ENCODE measurements at regions of chr4 and their contacts with region 1.

Region 1: DNA sequence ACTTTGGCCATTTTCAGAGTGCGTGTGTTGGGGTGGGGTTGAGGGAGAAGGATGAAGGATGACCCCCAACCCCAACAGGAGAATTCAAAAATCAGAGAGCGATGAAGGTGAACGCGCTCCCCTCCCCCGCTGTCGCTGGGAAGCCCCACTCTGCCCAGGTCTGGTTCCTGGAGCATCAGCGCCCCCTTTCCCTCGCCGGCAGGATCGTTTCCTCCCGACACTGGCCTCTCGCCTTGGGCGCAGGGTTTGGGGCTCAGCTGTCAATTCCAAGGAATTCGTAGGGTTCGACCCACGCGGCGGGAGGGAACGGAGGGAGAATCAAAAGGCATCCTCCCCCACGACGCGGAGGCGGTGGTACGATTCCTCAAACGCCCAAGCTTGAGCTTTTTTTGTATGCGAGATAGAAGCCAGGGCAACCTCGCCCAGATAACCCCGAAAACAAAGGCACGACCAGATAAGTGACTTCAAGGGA is 1.0 kb upstream of the PDGFRA start:
- DNase-seq: peak; percentile 74 to 78 (median 77)
- ATAC-seq: peak; percentile 68 to 74 (median 73)
- H3K4me3 ChIP-seq: peak overlapping the region; percentile 3 to 43 (median 6)
- H3K27ac ChIP-seq: no peak overlapping the region
- H3K4me1 ChIP-seq: peaks cover 0 to 51% (median 16%) of the 10 kb centered on the region in 4 donors
- H3K27me3 ChIP-seq: peaks cover 0 to 33% of the 10 kb centered on the region in 2 donors
- CTCF ChIP-seq: peak; percentile 62 to 80 (median 74)
- POLR2A ChIP-seq: no peak

Region 2: GRCh38 chr4:53816561-53816960 is 411.5 kb before region 1 on chr4:
- intact Hi-C with region 1: loop called in 1 of 2 experiments (anchors 10 kb)
- DNase-seq: no peak
- ATAC-seq: peak in 2 of 4 donors; percentile 18 to 27
- H3K4me3 ChIP-seq: no peak overlapping the region
- H3K27ac ChIP-seq: no peak overlapping the region
- H3K4me1 ChIP-seq: no peaks in the 10 kb centered on the region
- H3K27me3 ChIP-seq: no peaks in the 10 kb centered on the region
- CTCF ChIP-seq: no peak
- POLR2A ChIP-seq: no peak

Region 3: GRCh38 chr4:53908661-53909078 is 319.4 kb before region 1 on chr4:
- intact Hi-C with region 1: loop called (anchors 5 to 10 kb)
- DNase-seq: peak in 1 of 3 donors; percentile 69
- ATAC-seq: peak; percentile 97 to 99 (median 98)
- H3K4me3 ChIP-seq: no peak overlapping the region
- H3K27ac ChIP-seq: peak overlapping the region in 2 of 3 donors; percentile 16 to 40
- H3K4me1 ChIP-seq: peaks cover 0 to 6% (median 0%) of the 10 kb centered on the region in 4 donors
- H3K27me3 ChIP-seq: no peaks in the 10 kb centered on the region
- CTCF ChIP-seq: peak; percentile 69 to 89 (median 74)
- POLR2A ChIP-seq: peak; percentile 52

Region 4: GRCh38 chr4:53914313-53915016 is 313.6 kb before region 1 on chr4:
- intact Hi-C with region 1: loop called (anchors 5 to 10 kb)
- DNase-seq: no peak
- ATAC-seq: peak in 2 of 4 donors; percentile 22 to 56
- H3K4me3 ChIP-seq: no peak overlapping the region
- H3K27ac ChIP-seq: no peak overlapping the region
- H3K4me1 ChIP-seq: no peaks in the 10 kb centered on the region
- H3K27me3 ChIP-seq: no peaks in the 10 kb centered on the region
- CTCF ChIP-seq: no peak
- POLR2A ChIP-seq: no peak

Region 5: GRCh38 chr4:53929955-53930798 is 297.9 kb before region 1 on chr4:
- intact Hi-C with region 1: loop called in 1 of 2 experiments (anchors 5 kb)
- DNase-seq: peak; percentile 56 to 80 (median 69)
- ATAC-seq: peak; percentile 93 to 97 (median 94)
- H3K4me3 ChIP-seq: no peak overlapping the region
- H3K27ac ChIP-seq: no peak overlapping the region
- H3K4me1 ChIP-seq: peaks cover 0 to 15% (median 0%) of the 10 kb centered on the region in 4 donors
- H3K27me3 ChIP-seq: no peaks in the 10 kb centered on the region
- CTCF ChIP-seq: peak; percentile 69 to 91 (median 80)
- POLR2A ChIP-seq: no peak

Region 6: DNA sequence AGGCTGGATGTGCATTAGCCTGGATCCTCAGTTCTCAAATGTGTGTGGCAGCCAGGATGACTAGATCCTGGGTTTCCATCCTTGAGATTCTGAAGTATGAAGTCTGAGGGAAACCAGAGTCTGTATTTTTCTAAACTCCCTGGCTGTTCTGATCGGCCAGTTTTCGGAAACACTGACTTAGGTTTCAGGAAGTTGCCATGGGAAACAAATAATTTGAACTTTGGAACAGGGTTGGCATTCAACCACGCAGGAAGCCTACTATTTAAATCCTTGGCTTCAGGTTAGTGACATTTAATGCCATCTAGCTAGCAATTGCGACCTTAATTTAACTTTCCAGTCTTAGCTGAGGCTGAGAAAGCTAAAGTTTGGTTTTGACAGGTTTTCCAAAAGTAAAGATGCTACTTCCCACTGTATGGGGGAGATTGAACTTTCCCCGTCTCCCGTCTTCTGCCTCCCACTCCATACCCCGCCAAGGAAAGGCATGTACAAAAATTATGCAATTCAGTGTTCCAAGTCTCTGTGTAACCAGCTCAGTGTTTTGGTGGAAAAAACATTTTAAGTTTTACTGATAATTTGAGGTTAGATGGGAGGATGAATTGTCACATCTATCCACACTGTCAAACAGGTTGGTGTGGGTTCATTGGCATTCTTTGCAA is 68.6 kb after region 1 on chr4:
- intact Hi-C with region 1: no loop called
- DNase-seq: no peak
- ATAC-seq: peak; percentile 82 to 96 (median 90)
- H3K4me3 ChIP-seq: peak overlapping the region in 1 of 3 donors; percentile 17
- H3K27ac ChIP-seq: no peak overlapping the region
- H3K4me1 ChIP-seq: no peaks in the 10 kb centered on the region
- H3K27me3 ChIP-seq: no peaks in the 10 kb centered on the region
- CTCF ChIP-seq: no peak
- POLR2A ChIP-seq: no peak

Measured in right lobe of liver (tissue), 6 donors.